B cell (primary cell): ENCODE measurements at regions of chr11 and their contacts with region 1.

Region 1: DNA sequence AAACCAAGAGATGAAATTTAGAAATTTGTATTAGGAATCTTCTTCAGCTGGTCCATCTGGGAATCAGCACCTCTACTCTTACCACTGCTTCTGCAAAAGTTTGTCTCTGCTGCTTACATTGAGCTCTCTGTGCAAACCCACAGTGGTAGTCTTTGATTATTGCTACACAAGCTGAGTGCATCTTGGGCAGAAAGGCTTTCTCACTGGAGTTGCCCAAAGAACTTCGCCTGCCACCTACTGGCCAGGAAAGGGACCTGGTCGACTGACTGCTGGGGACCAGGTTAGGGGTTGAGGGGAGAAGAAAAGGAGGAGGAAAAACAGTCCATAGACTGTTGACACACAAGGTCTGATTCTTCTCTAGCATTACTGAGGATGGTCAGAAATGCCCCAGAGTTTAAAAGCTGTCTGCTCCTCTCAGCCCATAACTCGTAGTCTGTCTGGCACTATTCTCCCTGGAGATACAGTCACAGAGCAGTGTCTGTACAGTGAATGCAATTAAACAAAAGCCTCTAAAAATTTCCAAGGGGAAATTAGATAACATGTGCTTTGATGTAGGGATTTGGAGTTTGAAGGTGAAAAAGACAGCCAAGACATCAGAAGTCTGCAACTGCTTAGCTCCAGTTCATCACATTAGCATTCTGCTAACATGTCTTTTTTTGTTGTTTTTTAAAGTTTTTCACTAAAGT is 215.0 kb upstream of the CTSC start:
- DNase-seq: peak; percentile 44
- ATAC-seq: no peak
- H3K4me3 ChIP-seq: no peak overlapping the region
- H3K4me3 Mint-ChIP-seq: no peak overlapping the region
- H3K27ac ChIP-seq: no peak overlapping the region
- H3K27ac Mint-ChIP-seq: no peak overlapping the region
- H3K4me1 ChIP-seq: no peaks in the 10 kb centered on the region
- H3K4me1 Mint-ChIP-seq: no peaks in the 10 kb centered on the region
- H3K27me3 ChIP-seq: no peaks in the 10 kb centered on the region
- H3K27me3 Mint-ChIP-seq: peaks cover 15% of the 10 kb centered on the region
- CTCF ChIP-seq: peak; percentile 73

Region 2: DNA sequence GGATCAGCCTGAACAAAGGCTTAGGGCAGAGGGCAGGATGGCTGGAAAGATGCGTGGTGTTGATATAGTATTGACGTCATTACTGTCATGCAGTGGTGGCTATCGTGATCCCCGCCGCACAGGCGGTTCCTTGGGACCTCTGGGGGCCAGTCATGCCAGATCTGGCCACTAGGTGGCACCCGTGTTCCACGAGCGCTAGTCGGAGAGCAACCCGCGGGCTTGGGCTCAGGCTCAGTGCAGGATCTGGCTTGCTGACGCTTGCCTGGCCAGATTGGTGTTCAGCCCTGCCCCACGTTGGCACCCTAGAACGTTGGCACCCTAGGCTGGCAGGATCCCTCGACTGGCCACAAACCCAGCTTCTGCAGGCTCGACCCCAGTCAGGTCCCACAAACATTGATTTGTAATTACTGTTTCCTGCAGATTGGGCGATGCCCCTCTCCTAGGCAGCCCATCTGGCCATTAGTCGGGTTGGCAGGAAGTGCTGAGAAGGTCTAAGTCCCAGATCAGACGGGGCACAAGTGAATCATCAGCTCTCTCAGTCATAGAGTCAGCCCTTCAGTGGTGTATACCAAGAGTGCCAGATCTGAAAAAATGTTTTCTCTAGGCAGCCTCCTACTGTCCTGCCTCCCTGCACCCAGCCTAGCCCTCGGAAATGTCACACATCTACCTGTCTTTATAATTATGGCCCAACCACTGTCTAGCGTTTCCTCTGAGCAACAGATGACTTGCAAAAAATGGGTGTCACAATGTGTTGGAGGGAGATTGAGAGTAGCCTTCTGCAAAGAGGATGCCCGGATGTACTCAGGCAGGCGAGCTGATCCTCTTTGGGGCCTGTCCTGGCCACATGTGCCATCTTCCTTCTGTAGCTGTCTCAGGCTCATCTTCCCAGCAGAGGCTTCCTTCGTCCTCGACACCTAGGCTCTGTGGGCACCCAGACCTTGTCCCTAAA is 1199.5 kb before region 1 on chr11:
- CTCF ChIA-PET with region 1: interaction called, 14 read pairs
- POLR2A ChIA-PET with region 1: no interaction called
- intact Hi-C with region 1: no loop called
- DNase-seq: peak; percentile 76
- ATAC-seq: peak; percentile 88
- H3K4me3 ChIP-seq: no peak overlapping the region
- H3K4me3 Mint-ChIP-seq: no peak overlapping the region
- H3K27ac ChIP-seq: no peak overlapping the region
- H3K27ac Mint-ChIP-seq: no peak overlapping the region
- H3K4me1 ChIP-seq: peaks cover 7% of the 10 kb centered on the region in 2 donors
- H3K4me1 Mint-ChIP-seq: peaks cover 14% of the 10 kb centered on the region
- H3K27me3 ChIP-seq: peaks cover 0 to 4% (median 1%) of the 10 kb centered on the region in 4 experiments
- H3K27me3 Mint-ChIP-seq: peaks cover 10% of the 10 kb centered on the region
- CTCF ChIP-seq: peak; percentile 97

Region 3: GRCh38 chr11:88016392-88017170 is 535.9 kb before region 1 on chr11:
- CTCF ChIA-PET with region 1: interaction called, 40 read pairs
- POLR2A ChIA-PET with region 1: no interaction called
- intact Hi-C with region 1: loop called (anchors 1 kb)
- DNase-seq: peak; percentile 60
- ATAC-seq: peak; percentile 43
- H3K4me3 ChIP-seq: no peak overlapping the region
- H3K4me3 Mint-ChIP-seq: no peak overlapping the region
- H3K27ac ChIP-seq: no peak overlapping the region
- H3K27ac Mint-ChIP-seq: no peak overlapping the region
- H3K4me1 ChIP-seq: no peaks in the 10 kb centered on the region
- H3K4me1 Mint-ChIP-seq: no peaks in the 10 kb centered on the region
- H3K27me3 ChIP-seq: peaks cover 0 to 3% (median 0%) of the 10 kb centered on the region in 4 experiments
- H3K27me3 Mint-ChIP-seq: peaks cover 3% of the 10 kb centered on the region
- CTCF ChIP-seq: peak; percentile 79

Region 4: GRCh38 chr11:88231894-88232482 is 320.5 kb before region 1 on chr11:
- CTCF ChIA-PET with region 1: no interaction called
- POLR2A ChIA-PET with region 1: no interaction called
- intact Hi-C with region 1: loop called (anchors 5 kb)
- DNase-seq: peak; percentile 13
- ATAC-seq: no peak
- H3K4me3 ChIP-seq: no peak overlapping the region
- H3K4me3 Mint-ChIP-seq: no peak overlapping the region
- H3K27ac ChIP-seq: no peak overlapping the region
- H3K27ac Mint-ChIP-seq: no peak overlapping the region
- H3K4me1 ChIP-seq: no peaks in the 10 kb centered on the region
- H3K4me1 Mint-ChIP-seq: no peaks in the 10 kb centered on the region
- H3K27me3 ChIP-seq: no peaks in the 10 kb centered on the region
- H3K27me3 Mint-ChIP-seq: no peaks in the 10 kb centered on the region
- CTCF ChIP-seq: peak; percentile 40

Region 5: GRCh38 chr11:88508759-88509581 is 43.5 kb before region 1 on chr11:
- CTCF ChIA-PET with region 1: no interaction called
- POLR2A ChIA-PET with region 1: no interaction called
- intact Hi-C with region 1: no loop called
- DNase-seq: no peak
- ATAC-seq: no peak
- H3K4me3 ChIP-seq: no peak overlapping the region
- H3K4me3 Mint-ChIP-seq: peak overlapping the region; percentile 13
- H3K27ac ChIP-seq: no peak overlapping the region
- H3K27ac Mint-ChIP-seq: no peak overlapping the region
- H3K4me1 ChIP-seq: no peaks in the 10 kb centered on the region
- H3K4me1 Mint-ChIP-seq: peaks cover 6% of the 10 kb centered on the region
- H3K27me3 ChIP-seq: peaks cover 0 to 25% (median 11%) of the 10 kb centered on the region in 4 experiments
- H3K27me3 Mint-ChIP-seq: peaks cover 48% of the 10 kb centered on the region
- CTCF ChIP-seq: no peak

Region 6: GRCh38 chr11:88909500-88909899 is 357.0 kb after region 1 on chr11:
- CTCF ChIA-PET with region 1: no interaction called
- POLR2A ChIA-PET with region 1: no interaction called
- intact Hi-C with region 1: no loop called
- DNase-seq: no peak
- ATAC-seq: no peak
- H3K4me3 ChIP-seq: no peak overlapping the region
- H3K4me3 Mint-ChIP-seq: no peak overlapping the region
- H3K27ac ChIP-seq: no peak overlapping the region
- H3K27ac Mint-ChIP-seq: no peak overlapping the region
- H3K4me1 ChIP-seq: no peaks in the 10 kb centered on the region
- H3K4me1 Mint-ChIP-seq: no peaks in the 10 kb centered on the region
- H3K27me3 ChIP-seq: no peaks in the 10 kb centered on the region
- H3K27me3 Mint-ChIP-seq: no peaks in the 10 kb centered on the region
- CTCF ChIP-seq: no peak

Region 7: GRCh38 chr11:89436071-89436470 is 883.6 kb after region 1 on chr11:
- CTCF ChIA-PET with region 1: no interaction called
- POLR2A ChIA-PET with region 1: no interaction called
- intact Hi-C with region 1: no loop called
- DNase-seq: no peak
- ATAC-seq: no peak
- H3K4me3 ChIP-seq: no peak overlapping the region
- H3K4me3 Mint-ChIP-seq: no peak overlapping the region
- H3K27ac ChIP-seq: no peak overlapping the region
- H3K27ac Mint-ChIP-seq: no peak overlapping the region
- H3K4me1 ChIP-seq: no peaks in the 10 kb centered on the region
- H3K4me1 Mint-ChIP-seq: no peaks in the 10 kb centered on the region
- H3K27me3 ChIP-seq: no peaks in the 10 kb centered on the region
- H3K27me3 Mint-ChIP-seq: no peaks in the 10 kb centered on the region
- CTCF ChIP-seq: no peak